PC-3 (cell line): ENCODE measurements at regions of chr11 and their contacts with region 1.

Region 1: DNA sequence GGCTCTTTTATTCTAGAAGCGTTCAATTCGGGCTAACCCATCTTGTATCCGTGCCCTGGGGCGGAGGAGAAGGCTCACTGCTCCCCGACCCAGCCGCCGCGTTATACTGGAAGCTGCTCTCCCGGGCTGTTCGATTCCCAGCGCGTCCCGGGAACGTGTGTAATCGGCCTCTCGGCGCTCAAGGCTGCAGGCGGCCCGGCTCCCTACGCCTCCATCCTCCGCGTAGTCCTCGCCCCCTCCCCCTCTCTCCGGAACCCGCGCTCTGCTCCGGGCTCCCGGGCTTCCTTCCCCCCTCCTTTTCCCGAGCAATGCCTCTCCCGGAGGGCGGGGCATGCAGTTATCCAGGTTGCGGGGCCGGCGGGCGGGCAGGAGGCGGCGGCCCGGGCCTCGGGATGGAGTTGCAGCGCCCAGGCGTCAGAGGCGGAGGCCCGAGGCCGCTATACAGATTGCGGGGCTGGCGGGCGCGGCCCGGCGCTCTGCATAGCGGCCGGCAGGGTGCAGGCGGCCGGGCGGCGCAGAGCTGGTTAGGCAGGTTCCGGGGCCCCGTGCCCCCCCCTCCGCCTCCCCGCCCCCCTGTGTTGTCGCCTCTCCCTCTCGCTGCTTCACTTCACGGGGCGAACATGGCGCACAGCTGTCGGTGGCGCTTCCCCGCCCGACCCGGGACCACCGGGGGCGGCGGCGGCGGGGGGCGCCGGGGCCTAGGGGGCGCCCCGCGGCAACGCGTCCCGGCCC is at the start of gene KMT2A:
- DNase-seq: peak; percentile 99
- ATAC-seq: peak; percentile 63
- H3K4me3 ChIP-seq: peak within 1 kb of the TSS; percentile 82
- H3K27ac ChIP-seq: peak within 1 kb of the TSS; percentile 57
- H3K4me1 ChIP-seq: peaks cover 30% of the 10 kb centered on the region
- H3K27me3 ChIP-seq: no peaks in the 10 kb centered on the region
- CTCF ChIP-seq: no peak
- total RNA-seq, gene KMT2A: 35.3 and 38.2 TPM in 2 replicates

Region 2: DNA sequence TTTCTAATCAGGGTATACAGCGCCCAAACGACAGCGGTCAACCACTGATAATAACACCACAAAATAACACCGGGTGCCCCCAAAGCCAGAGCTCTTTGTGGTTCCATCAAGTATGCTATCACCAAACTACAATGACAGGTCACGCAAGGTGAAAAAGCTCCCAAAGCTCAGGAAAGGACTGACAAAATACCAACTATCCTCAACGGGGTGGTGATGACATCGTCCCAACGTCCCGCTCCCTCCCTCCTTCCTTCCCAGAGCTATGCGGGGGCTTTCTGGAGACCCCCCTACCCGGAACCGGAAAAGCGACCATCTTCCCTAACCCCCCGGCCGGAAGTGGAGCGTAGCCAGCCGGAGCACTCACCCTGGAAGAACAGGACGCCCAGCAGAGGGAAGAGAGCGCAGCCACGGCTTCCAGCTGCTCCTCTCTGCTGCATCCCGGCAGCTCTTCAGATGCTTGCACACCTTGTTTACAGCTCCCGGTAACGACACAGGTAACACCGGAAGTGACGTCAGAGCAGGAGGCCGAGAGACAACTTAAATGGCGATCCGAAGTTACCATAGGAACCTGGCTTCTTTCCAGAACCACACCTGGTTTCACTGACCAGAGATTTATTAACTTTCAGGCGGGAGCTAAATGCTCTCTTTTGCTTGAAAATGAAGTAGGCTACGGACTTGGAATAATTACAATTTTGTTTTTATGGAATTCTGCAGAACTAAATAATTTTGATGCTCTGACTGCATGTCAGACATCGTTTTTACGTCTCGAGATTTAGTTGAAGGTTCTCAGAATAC is 184.0 kb before region 1 on chr11 and contains the start of gene MPZL3:
- CTCF ChIA-PET with region 1: no interaction called
- POLR2A ChIA-PET with region 1: no interaction called
- intact Hi-C with region 1: no loop called
- DNase-seq: peak; percentile 99
- ATAC-seq: peak; percentile 72
- H3K4me3 ChIP-seq: peak within 1 kb of the TSS; percentile 90
- H3K27ac ChIP-seq: peak within 1 kb of the TSS; percentile 84
- H3K4me1 ChIP-seq: peaks cover 20% of the 10 kb centered on the region
- H3K27me3 ChIP-seq: no peaks in the 10 kb centered on the region
- CTCF ChIP-seq: no peak
- total RNA-seq, gene MPZL3: 7.0 and 8.4 TPM in 2 replicates

Region 3: DNA sequence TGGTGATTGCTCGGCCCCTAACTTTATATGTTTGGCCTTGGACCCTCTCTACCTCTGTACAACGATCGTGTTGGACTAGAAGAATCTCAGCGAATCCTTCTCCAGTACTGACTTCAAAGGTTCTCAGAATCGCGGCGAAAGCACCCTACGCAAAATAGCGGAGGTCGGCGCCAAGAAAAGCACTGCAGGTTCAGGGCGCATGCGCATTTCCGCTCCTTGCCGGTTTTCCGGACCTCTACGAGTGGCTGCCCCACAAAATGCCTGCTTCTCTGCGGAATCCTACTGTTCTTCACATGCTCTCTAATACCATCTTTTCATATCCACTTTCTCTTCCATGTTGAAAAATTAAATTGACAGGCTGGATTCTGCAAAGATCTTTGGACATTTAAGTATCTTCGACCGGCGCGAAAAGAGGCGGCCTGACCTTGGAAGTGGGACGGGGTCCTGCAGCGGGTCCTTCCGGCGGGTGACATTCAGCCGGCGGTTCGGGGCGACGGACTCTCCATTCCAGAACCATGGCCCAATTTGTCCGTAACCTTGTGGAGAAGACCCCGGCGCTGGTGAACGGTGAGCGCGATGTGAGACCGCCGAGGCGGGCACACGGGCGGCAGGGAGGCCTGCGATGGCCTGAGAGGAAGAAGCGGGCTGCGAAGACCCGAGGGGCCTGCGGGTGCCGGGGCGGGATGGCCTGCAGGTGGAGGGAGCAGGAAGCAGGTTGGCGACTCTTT is 34.7 kb before region 1 on chr11 and contains the start of gene ATP5MG:
- CTCF ChIA-PET with region 1: no interaction called
- POLR2A ChIA-PET with region 1: interaction called, 11 read pairs
- intact Hi-C with region 1: loop called (anchors 2 kb)
- DNase-seq: peak; percentile 95
- ATAC-seq: peak; percentile 79
- H3K4me3 ChIP-seq: peak within 1 kb of the TSS; percentile 90
- H3K27ac ChIP-seq: peak within 1 kb of the TSS; percentile 77
- H3K4me1 ChIP-seq: peaks cover 14% of the 10 kb centered on the region; the same call in 1 of the 2 replicates
- H3K27me3 ChIP-seq: no peaks in the 10 kb centered on the region
- CTCF ChIP-seq: 0 out of 2 replicates have a peak, but pooled peaks have one; percentile 19
- total RNA-seq, gene ATP5MG: 256 and 375 TPM in 2 replicates

Region 4: GRCh38 chr11:118406599-118407166 is 29.4 kb before region 1 on chr11:
- CTCF ChIA-PET with region 1: no interaction called
- POLR2A ChIA-PET with region 1: interaction called, 15 read pairs
- intact Hi-C with region 1: loop called (anchors 2 kb)
- DNase-seq: no peak
- ATAC-seq: no peak
- H3K4me3 ChIP-seq: no peak overlapping the region
- H3K27ac ChIP-seq: no peak overlapping the region
- H3K4me1 ChIP-seq: peaks cover 7% of the 10 kb centered on the region; the same call in 1 of the 2 replicates
- H3K27me3 ChIP-seq: no peaks in the 10 kb centered on the region
- CTCF ChIP-seq: no peak

Region 5: GRCh38 chr11:118488480-118489109 is 52.5 kb after region 1 on chr11:
- CTCF ChIA-PET with region 1: interaction called, 3 read pairs
- POLR2A ChIA-PET with region 1: no interaction called
- intact Hi-C with region 1: loop called (anchors 1 kb)
- DNase-seq: peak; percentile 80
- ATAC-seq: peak; percentile 73
- H3K4me3 ChIP-seq: no peak overlapping the region
- H3K27ac ChIP-seq: no peak overlapping the region
- H3K4me1 ChIP-seq: no peaks in the 10 kb centered on the region
- H3K27me3 ChIP-seq: no peaks in the 10 kb centered on the region
- CTCF ChIP-seq: peak; percentile 97

Region 6: GRCh38 chr11:119044708-119045107 is 608.6 kb after region 1 on chr11:
- CTCF ChIA-PET with region 1: no interaction called
- POLR2A ChIA-PET with region 1: interaction called, 14 read pairs
- intact Hi-C with region 1: no loop called
- DNase-seq: no peak
- ATAC-seq: no peak
- H3K4me3 ChIP-seq: no peak overlapping the region
- H3K27ac ChIP-seq: no peak overlapping the region
- H3K4me1 ChIP-seq: no peaks in the 10 kb centered on the region
- H3K27me3 ChIP-seq: no peaks in the 10 kb centered on the region
- CTCF ChIP-seq: no peak; the same call in 1 of the 2 replicates

Region 7: GRCh38 chr11:119168471-119169281 is 732.6 kb after region 1 on chr11 and contains the start of gene NLRX1:
- CTCF ChIA-PET with region 1: interaction called, 16 read pairs
- POLR2A ChIA-PET with region 1: no interaction called
- intact Hi-C with region 1: no loop called
- DNase-seq: peak; percentile 90
- ATAC-seq: peak; percentile 80
- H3K4me3 ChIP-seq: peak within 1 kb of the TSS; percentile 80
- H3K27ac ChIP-seq: peak within 1 kb of the TSS; percentile 36
- H3K4me1 ChIP-seq: peaks cover 22% of the 10 kb centered on the region
- H3K27me3 ChIP-seq: no peaks in the 10 kb centered on the region
- CTCF ChIP-seq: peak; percentile 90
- total RNA-seq, gene NLRX1: 16.8 and 17.2 TPM in 2 replicates